Heart left ventricle (tissue), 16 donors: ENCODE measurements at regions of chr10 and their contacts with region 1.

Region 1: DNA sequence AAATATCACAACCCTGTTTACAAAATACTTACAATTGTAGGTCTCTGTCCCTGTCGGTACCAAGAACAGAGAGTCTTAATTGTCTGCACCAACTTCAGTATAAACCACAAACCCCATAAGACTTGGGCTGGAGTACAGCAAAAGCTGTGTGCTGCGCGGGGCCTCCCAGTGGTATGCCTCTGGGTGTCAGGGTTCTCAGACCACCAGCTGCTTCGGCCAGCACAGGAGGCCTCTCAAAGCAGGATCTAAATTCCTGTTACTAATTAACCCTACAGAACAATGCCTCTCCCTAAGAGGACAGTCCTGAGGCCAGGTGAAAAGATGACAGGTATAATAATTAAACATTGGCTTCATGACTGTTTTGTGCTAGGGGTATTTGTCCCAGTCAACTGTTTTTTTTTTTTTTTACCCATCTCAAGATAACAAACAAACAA is 957 bp upstream of the SVIL start:
- DNase-seq: no peak
- ATAC-seq: peak in 3 of 4 donors; percentile 26 to 39 (median 35)
- H3K4me3 ChIP-seq: peak overlapping the region in 6 of 12 donors; percentile 8 to 62 (median 36)
- H3K27ac ChIP-seq: peak overlapping the region; percentile 73 to 94 (median 88)
- H3K4me1 ChIP-seq: peaks cover 3 to 45% (median 20%) of the 10 kb centered on the region in 12 donors
- H3K27me3 ChIP-seq: no peaks in the 10 kb centered on the region
- CTCF ChIP-seq: no peak
- POLR2A ChIP-seq: no peak

Region 2: GRCh38 chr10:29598851-29599311 is 36.8 kb before region 1 on chr10:
- intact Hi-C with region 1: loop called in 4 of 10 experiments (anchors 5 kb)
- DNase-seq: peak in 3 of 5 donors; percentile 48 to 63 (median 55)
- ATAC-seq: peak; percentile 82 to 86 (median 84)
- H3K4me3 ChIP-seq: peak overlapping the region in 5 of 12 donors; percentile 1 to 32 (median 15)
- H3K27ac ChIP-seq: peak overlapping the region; percentile 71 to 95 (median 80)
- H3K4me1 ChIP-seq: peaks cover 0 to 89% (median 31%) of the 10 kb centered on the region in 12 donors
- H3K27me3 ChIP-seq: no peaks in the 10 kb centered on the region
- CTCF ChIP-seq: no peak
- POLR2A ChIP-seq: no peak

Region 3: DNA sequence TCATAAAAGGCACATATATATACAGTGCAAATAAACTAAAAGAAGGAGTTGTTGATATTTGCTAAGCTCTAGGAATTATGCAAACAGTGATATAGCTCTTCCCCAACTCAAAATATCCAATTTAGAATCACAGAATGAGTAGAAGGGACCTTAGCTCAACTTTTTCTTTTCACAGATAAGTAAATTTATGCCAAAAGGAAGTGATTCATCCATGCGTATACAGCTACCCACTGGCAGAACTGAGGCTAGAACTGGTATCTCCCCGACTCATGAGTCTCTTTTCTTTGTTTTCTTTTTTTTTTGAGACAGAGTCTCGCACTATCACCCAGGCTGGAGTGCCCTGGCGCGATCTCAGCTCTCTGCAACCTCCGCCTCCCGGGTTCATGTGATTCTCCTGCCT is 53.3 kb after region 1 on chr10:
- intact Hi-C with region 1: no loop called
- DNase-seq: no peak
- ATAC-seq: peak in 1 of 4 donors; percentile 7
- H3K4me3 ChIP-seq: no peak overlapping the region
- H3K27ac ChIP-seq: peak overlapping the region in 1 of 12 donors; percentile 64
- H3K4me1 ChIP-seq: peaks cover 0 to 40% (median 19%) of the 10 kb centered on the region in 12 donors
- H3K27me3 ChIP-seq: no peaks in the 10 kb centered on the region
- CTCF ChIP-seq: no peak
- POLR2A ChIP-seq: no peak